ENCODE measurements at regions of chr9 and their contacts with region 1.

Region 1: DNA sequence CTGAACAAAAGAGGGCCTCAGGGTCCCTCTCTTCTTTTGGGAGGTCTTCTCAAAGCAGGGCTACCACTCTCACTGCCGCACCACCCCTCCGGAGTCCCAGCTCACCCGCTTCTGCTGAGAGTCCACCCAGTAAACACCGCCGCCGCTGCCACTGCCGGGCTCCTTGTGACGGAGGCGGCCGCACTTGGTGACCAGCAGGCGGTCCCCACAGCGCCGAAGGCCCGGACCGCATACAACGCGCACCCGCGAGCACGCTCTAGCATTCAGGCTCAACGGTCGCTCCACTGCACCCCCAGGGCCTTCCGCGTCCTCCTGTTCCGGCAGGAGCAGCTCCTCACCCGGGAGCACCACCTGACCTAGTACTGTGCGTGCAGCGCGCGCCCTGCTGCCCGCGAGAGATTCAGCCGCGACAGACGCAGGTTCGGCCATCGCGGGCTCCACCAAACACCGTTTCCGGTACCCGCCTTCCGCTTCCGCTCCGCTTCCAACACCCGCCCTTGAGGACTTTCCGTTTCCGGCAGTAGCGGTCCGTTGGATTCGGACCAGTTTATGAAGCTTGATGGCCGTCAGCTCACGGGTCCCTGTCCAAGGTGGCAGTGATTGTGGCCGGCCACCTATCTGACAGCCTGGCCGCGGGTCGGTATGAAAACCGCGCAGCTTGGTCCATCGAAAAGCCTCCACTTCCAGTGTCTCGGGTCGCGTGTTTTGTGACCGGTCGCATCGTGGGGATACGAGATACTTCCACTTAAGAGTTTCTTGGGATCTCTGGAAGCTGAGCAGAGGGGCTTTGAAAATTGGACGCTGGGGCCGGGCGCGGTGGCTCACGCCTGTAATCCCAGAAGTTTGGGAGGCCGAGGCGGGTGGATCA is at the start of gene EXOSC3:
- DNase-seq: peak; percentile 82 to 88 (median 83)
- H3K4me3 ChIP-seq: peak within 1 kb of the TSS; percentile 93 to 98
- H3K4me3 Mint-ChIP-seq: peak within 1 kb of the TSS; percentile 96 to 99 (median 96)
- H3K27ac ChIP-seq: peak within 1 kb of the TSS; percentile 83
- H3K27ac Mint-ChIP-seq: peak within 1 kb of the TSS; percentile 95 to 98 (median 97)
- H3K4me1 ChIP-seq: peaks cover 31% of the 10 kb centered on the region
- H3K4me1 Mint-ChIP-seq: peaks cover 23 to 45% (median 30%) of the 10 kb centered on the region in 4 donors
- H3K27me3 ChIP-seq: no peaks in the 10 kb centered on the region
- H3K27me3 Mint-ChIP-seq: no peaks in the 10 kb centered on the region
- total RNA-seq, gene EXOSC3: 63.5 to 68.6 TPM

Region 2: DNA sequence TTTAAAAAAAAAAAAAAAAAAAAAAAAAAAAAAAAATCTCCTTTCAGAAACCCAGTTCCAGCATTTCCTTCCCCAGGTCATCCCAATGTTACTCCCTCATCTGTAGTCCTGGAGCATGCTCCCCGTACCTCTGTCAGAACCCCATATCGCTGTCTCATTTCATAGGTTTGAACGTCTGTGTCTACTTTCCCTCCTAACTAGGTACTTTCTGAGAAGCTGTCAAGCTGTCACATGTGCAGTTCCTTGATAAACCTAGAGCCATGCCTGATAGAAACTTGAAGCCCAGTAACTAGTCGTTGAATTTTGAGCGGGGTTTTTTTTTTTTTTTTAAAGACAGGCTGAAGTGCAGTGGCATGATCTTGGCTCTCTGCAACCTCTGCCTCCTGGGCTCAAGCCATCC is 15.5 kb before region 1 on chr9:
- CTCF ChIA-PET with region 1: interaction called, 3 read pairs
- POLR2A ChIA-PET with region 1: interaction called, 10 read pairs
- intact Hi-C with region 1: no loop called
- DNase-seq: no peak
- H3K4me3 ChIP-seq: no peak overlapping the region
- H3K4me3 Mint-ChIP-seq: no peak overlapping the region
- H3K27ac ChIP-seq: no peak overlapping the region
- H3K27ac Mint-ChIP-seq: peak overlapping the region in 5 of 7 donors; percentile 30 to 74 (median 59)
- H3K4me1 ChIP-seq: no peaks in the 10 kb centered on the region
- H3K4me1 Mint-ChIP-seq: peaks cover 0 to 5% (median 4%) of the 10 kb centered on the region in 4 donors
- H3K27me3 ChIP-seq: no peaks in the 10 kb centered on the region
- H3K27me3 Mint-ChIP-seq: no peaks in the 10 kb centered on the region

Region 3: GRCh38 chr9:37800631-37801286 is 15.9 kb after region 1 on chr9 and contains the start of gene DCAF10:
- CTCF ChIA-PET with region 1: interaction called, 5 read pairs
- POLR2A ChIA-PET with region 1: interaction called, 51 read pairs
- intact Hi-C with region 1: loop called (anchors 1 kb)
- DNase-seq: peak; percentile 83 to 91 (median 86)
- H3K4me3 ChIP-seq: peak within 1 kb of the TSS; percentile 76 to 98
- H3K4me3 Mint-ChIP-seq: peak within 1 kb of the TSS; percentile 91 to 96 (median 94)
- H3K27ac ChIP-seq: peak within 1 kb of the TSS; percentile 70
- H3K27ac Mint-ChIP-seq: peak within 1 kb of the TSS; percentile 87 to 97 (median 92)
- H3K4me1 ChIP-seq: peaks cover 35% of the 10 kb centered on the region
- H3K4me1 Mint-ChIP-seq: peaks cover 23 to 48% (median 33%) of the 10 kb centered on the region in 4 donors
- H3K27me3 ChIP-seq: no peaks in the 10 kb centered on the region
- H3K27me3 Mint-ChIP-seq: no peaks in the 10 kb centered on the region
- total RNA-seq, gene DCAF10: 20.3 to 21.7 TPM

Measured in CD4-positive, alpha-beta memory T cell (primary cell).